ENCODE measurements at regions of chr7 and their contacts with region 1.

Region 1: DNA sequence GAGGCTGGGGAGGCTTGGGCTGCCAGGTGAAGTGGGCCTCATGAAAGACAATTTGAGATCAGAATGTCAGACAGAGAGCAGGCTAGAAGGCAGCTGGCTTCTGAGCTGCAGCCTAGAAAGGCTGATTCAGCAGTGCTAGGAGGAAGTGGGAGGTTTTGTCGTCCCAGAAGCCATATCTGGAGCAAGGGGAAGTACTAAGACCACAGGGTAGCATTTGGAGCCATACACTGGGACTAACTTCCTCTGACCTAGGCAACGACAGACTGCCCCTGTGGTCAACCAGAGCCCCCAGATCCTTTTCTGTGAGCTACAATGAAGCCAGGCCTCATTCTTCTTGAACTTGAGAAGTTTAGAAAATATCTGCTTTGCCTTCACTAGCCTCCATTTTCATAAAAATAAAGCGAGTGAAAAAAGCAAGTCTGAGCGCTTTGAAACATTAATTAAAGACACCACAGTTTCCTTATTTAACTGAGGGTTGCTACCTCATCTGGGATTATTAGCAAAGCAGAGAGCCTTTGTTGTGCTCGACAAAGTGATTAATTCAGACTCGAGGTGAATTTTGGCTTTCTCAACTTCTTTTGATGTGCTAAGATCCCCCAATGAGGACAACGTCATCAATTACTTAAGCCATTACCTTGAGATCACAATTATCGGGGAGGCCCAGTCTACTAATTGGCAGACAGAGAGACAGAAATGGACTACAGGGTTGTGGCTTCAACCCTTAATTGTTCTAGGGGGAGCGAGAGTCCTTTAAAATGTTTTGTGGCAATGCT is 26.6 kb downstream of the TBXAS1 start:
- DNase-seq: no peak
- H3K4me3 ChIP-seq: no peak overlapping the region
- H3K27ac ChIP-seq: no peak overlapping the region
- H3K4me1 ChIP-seq: no peaks in the 10 kb centered on the region
- H3K27me3 ChIP-seq: no peaks in the 10 kb centered on the region
- CTCF ChIP-seq: no peak

Region 2: GRCh38 chr7:139808427-139808826 is 47.3 kb before region 1 on chr7:
- CTCF ChIA-PET with region 1: no interaction called
- dilution Hi-C with region 1: no loop called
- in situ Hi-C with region 1: no loop called
- intact Hi-C with region 1: loop called (anchors 1 kb)
- DNase-seq: no peak
- H3K4me3 ChIP-seq: no peak overlapping the region
- H3K27ac ChIP-seq: no peak overlapping the region
- H3K4me1 ChIP-seq: no peaks in the 10 kb centered on the region
- H3K27me3 ChIP-seq: no peaks in the 10 kb centered on the region
- CTCF ChIP-seq: no peak

Region 3: GRCh38 chr7:139893999-139894398 is 38.3 kb after region 1 on chr7:
- CTCF ChIA-PET with region 1: no interaction called
- dilution Hi-C with region 1: no loop called
- in situ Hi-C with region 1: no loop called
- intact Hi-C with region 1: no loop called
- DNase-seq: no peak
- H3K4me3 ChIP-seq: no peak overlapping the region
- H3K27ac ChIP-seq: no peak overlapping the region
- H3K4me1 ChIP-seq: peaks cover 14% of the 10 kb centered on the region
- H3K27me3 ChIP-seq: no peaks in the 10 kb centered on the region
- CTCF ChIP-seq: no peak

Region 4: DNA sequence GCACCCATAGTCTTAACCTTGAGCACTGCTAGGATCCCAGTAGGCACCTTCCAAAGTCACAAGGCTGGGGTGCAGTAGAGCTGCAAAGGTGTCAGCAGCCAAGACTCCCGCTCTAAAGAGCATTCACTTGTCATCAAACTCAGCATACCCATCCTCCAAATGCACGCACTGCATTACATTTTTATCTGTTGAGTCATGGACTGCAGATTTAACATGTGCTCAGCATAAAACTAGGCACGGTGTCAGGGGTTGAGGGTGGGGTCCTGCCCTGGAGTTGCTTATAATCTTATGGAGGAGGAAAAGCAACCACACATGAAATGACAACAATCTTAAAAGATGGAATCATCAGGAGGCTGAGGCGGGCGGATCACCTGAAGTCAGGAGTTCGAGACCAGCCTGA is 104.5 kb after region 1 on chr7:
- CTCF ChIA-PET with region 1: no interaction called
- dilution Hi-C with region 1: loop called (anchors 5 kb)
- in situ Hi-C with region 1: no loop called
- intact Hi-C with region 1: no loop called
- DNase-seq: no peak
- H3K4me3 ChIP-seq: no peak overlapping the region
- H3K27ac ChIP-seq: no peak overlapping the region
- H3K4me1 ChIP-seq: no peaks in the 10 kb centered on the region
- H3K27me3 ChIP-seq: no peaks in the 10 kb centered on the region
- CTCF ChIP-seq: no peak